Sciatic nerve (tissue), 2 donors: ENCODE measurements at regions of chr1 and their contacts with region 1.

Region 1: DNA sequence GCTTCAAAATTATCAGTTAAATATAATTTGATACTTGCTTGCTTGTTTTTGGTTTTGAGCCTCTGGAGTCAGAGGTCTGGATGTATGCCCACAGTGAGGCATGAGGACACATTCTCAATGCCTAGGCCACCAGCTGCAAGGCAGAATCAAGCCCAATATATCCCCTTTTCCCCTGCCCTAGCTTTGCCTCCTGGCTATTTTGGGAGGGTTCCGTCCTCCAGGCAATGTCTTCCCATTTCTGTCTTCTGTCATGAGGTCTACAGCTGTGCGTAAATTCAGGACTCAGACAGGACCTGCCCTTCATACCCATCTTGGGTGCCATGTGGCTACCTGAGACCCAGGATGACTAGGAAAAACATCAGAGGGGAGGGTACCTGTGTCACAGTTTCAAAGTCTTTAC is 19.2 kb downstream of the NRDC start:
- DNase-seq: no peak
- ATAC-seq: no peak

Region 2: DNA sequence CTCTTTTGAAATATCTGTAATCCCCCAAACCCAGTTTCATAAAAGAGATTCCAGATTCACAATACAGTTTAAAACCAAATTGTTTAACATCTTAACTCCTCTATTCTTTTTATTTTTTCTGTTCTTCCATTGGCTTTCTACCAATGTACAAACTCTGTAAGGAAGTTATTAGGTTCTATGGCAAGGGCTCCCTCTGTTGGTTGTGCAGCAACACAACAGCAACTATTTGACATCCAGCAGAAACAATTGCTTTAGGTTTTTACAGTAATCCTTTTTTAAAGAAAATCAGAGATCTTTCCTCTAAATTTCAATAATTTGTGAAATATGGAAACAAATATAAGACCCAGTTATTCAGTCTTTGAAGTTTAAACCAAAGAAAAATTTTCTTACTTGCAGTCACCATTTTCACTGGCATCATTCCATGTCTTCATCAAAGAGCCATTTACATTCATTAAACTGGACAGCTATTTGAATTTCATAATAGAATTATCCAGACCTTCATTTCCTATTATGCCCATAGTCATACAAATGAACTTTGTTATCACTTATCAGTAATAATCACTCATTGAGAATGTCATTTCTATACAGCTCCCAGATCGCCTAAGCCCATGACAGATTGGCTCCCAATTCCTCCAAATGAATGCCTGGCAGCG is 669.8 kb before region 1 on chr1:
- intact Hi-C with region 1: loop called (anchors 5 kb)
- DNase-seq: no peak
- ATAC-seq: no peak

Region 3: GRCh38 chr1:51897699-51898031 is 38.3 kb after region 1 on chr1:
- intact Hi-C with region 1: no loop called
- DNase-seq: no peak
- ATAC-seq: no peak